PC-9 (cell line): ENCODE measurements at regions of chr14 and their contacts with region 1.

Region 1: GRCh38 chr14:75906676-75907280 is 75.0 kb downstream of the TGFB3 start:
- DNase-seq: peak; percentile 60 to 64
- H3K4me3 ChIP-seq: no peak overlapping the region
- H3K27ac ChIP-seq: no peak overlapping the region
- H3K4me1 ChIP-seq: no peaks in the 10 kb centered on the region
- H3K27me3 ChIP-seq: no peaks in the 10 kb centered on the region
- CTCF ChIP-seq: peak; percentile 100

Region 2: GRCh38 chr14:75842551-75842950 is 64.2 kb before region 1 on chr14:
- CTCF ChIA-PET with region 1: interaction called, 10 read pairs
- POLR2A ChIA-PET with region 1: no interaction called
- intact Hi-C with region 1: no loop called
- DNase-seq: no peak
- H3K4me3 ChIP-seq: no peak overlapping the region
- H3K27ac ChIP-seq: no peak overlapping the region
- H3K4me1 ChIP-seq: peaks cover 14% of the 10 kb centered on the region
- H3K27me3 ChIP-seq: no peaks in the 10 kb centered on the region
- CTCF ChIP-seq: no peak

Region 3: GRCh38 chr14:75976826-75977581 is 70.2 kb after region 1 on chr14:
- CTCF ChIA-PET with region 1: interaction called, 24 read pairs
- POLR2A ChIA-PET with region 1: interaction called, 27 read pairs
- intact Hi-C with region 1: loop called (anchors 1 kb)
- DNase-seq: no peak
- H3K4me3 ChIP-seq: no peak overlapping the region
- H3K27ac ChIP-seq: no peak overlapping the region
- H3K4me1 ChIP-seq: peaks cover 27% of the 10 kb centered on the region
- H3K27me3 ChIP-seq: no peaks in the 10 kb centered on the region
- CTCF ChIP-seq: no peak

Region 4: GRCh38 chr14:76056128-76056527 is 149.3 kb after region 1 on chr14:
- CTCF ChIA-PET with region 1: no interaction called
- POLR2A ChIA-PET with region 1: no interaction called
- intact Hi-C with region 1: no loop called
- DNase-seq: no peak
- H3K4me3 ChIP-seq: no peak overlapping the region
- H3K27ac ChIP-seq: no peak overlapping the region
- H3K4me1 ChIP-seq: no peaks in the 10 kb centered on the region
- H3K27me3 ChIP-seq: no peaks in the 10 kb centered on the region
- CTCF ChIP-seq: peak; percentile 64

Region 5: GRCh38 chr14:76109087-76109880 is 202.5 kb after region 1 on chr14:
- CTCF ChIA-PET with region 1: no interaction called
- POLR2A ChIA-PET with region 1: no interaction called
- intact Hi-C with region 1: no loop called
- DNase-seq: peak; percentile 68 to 70
- H3K4me3 ChIP-seq: no peak overlapping the region
- H3K27ac ChIP-seq: no peak overlapping the region
- H3K4me1 ChIP-seq: no peaks in the 10 kb centered on the region
- H3K27me3 ChIP-seq: peaks cover 96% of the 10 kb centered on the region
- CTCF ChIP-seq: no peak

Region 6: GRCh38 chr14:76484355-76484754 is 577.6 kb after region 1 on chr14:
- CTCF ChIA-PET with region 1: no interaction called
- POLR2A ChIA-PET with region 1: no interaction called
- intact Hi-C with region 1: no loop called
- DNase-seq: no peak
- H3K4me3 ChIP-seq: no peak overlapping the region
- H3K27ac ChIP-seq: no peak overlapping the region
- H3K4me1 ChIP-seq: no peaks in the 10 kb centered on the region
- H3K27me3 ChIP-seq: peaks cover 97% of the 10 kb centered on the region
- CTCF ChIP-seq: no peak; the same call in 1 of the 2 replicates